ENCODE measurements at regions of chr5 and their contacts with region 1.

Region 1: DNA sequence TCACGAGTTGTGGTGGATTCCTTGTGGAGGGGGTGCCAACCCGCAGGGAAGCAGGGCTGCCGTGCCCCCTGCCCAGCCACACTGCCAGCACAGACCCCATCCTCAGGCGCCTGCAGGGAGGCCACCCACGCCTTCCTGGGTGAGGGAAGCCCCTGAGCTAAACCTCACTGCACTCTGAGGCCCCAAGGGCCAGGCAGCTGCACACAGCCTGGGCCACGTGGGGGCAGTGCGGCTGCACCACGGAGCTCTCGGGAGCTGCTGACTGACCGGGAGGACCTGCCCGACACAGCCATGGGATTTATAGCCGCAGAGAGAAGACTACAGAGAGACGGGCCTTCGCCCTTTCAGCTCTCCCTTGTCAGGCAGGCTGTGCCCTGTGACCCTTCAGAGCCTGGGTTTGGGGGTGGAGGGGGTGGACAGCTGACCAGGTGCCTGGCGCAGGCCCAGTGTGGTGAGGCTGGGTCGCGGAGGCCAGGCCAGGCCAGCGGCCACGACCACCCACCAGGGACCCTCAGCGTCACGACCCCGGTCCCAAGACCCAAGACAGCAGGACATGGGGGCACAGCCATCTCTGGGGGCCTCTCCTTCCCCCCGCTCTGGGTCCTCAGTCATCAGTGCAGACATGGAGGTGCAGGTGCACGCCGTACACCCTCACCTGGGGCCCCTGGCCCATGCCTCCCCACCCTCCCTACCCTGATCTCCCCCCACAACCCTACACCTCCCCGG is 4.3 kb upstream of the AHRR start:
- DNase-seq: peak; percentile 74
- ATAC-seq: peak; percentile 71
- H3K4me3 ChIP-seq: no peak overlapping the region
- H3K27ac ChIP-seq: no peak overlapping the region
- H3K4me1 ChIP-seq: peaks cover 14% of the 10 kb centered on the region
- H3K27me3 ChIP-seq: no peaks in the 10 kb centered on the region
- CTCF ChIP-seq: peak; percentile 89
- POLR2A ChIP-seq: no peak
- RAD21 ChIP-seq: peak; percentile 95

Region 2: DNA sequence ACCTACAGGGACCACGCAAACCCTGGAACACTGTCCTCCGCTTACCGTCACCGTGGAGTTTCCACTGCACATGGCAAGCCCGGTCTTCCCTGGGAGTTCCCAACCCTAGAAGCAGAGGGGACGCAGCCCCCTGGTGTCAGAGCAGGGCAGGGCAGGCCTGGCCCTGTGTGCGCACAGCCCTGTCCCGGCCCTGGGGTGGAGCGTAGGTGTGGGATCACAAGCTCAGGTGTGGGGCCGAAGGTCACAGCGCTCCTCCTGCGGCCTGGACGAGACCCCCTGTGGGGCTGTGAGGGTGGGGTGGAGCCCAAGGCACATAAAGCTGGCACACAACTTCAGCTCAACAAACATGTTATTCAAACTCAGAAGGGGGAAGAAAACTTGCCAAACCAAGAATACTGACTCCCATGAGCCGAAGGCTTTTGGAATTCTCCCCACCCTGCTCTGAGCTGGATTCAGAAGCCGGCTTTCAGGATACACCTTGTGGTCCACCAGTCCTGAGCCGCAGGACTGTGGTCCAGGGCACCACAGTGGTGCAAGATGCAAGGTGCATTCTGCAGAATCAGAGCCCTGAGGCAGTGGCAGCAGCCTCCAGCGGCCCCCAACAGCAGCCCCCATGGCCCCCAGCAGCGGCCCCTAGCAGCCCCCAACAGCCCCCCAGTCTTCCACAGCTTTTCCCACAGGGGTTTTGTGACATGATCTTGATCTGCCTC is 113.9 kb after region 1 on chr5:
- CTCF ChIA-PET with region 1: no interaction called
- POLR2A ChIA-PET with region 1: no interaction called
- dilution Hi-C with region 1: no loop called
- in situ Hi-C with region 1: loop called (anchors 5 kb)
- intact Hi-C with region 1: loop called (anchors 1 kb)
- DNase-seq: peak; percentile 48
- ATAC-seq: peak; percentile 50
- H3K4me3 ChIP-seq: no peak overlapping the region
- H3K27ac ChIP-seq: no peak overlapping the region
- H3K4me1 ChIP-seq: peaks cover 10% of the 10 kb centered on the region
- H3K27me3 ChIP-seq: no peaks in the 10 kb centered on the region
- CTCF ChIP-seq: peak; percentile 61
- POLR2A ChIP-seq: no peak
- RAD21 ChIP-seq: peak; percentile 74

Region 3: DNA sequence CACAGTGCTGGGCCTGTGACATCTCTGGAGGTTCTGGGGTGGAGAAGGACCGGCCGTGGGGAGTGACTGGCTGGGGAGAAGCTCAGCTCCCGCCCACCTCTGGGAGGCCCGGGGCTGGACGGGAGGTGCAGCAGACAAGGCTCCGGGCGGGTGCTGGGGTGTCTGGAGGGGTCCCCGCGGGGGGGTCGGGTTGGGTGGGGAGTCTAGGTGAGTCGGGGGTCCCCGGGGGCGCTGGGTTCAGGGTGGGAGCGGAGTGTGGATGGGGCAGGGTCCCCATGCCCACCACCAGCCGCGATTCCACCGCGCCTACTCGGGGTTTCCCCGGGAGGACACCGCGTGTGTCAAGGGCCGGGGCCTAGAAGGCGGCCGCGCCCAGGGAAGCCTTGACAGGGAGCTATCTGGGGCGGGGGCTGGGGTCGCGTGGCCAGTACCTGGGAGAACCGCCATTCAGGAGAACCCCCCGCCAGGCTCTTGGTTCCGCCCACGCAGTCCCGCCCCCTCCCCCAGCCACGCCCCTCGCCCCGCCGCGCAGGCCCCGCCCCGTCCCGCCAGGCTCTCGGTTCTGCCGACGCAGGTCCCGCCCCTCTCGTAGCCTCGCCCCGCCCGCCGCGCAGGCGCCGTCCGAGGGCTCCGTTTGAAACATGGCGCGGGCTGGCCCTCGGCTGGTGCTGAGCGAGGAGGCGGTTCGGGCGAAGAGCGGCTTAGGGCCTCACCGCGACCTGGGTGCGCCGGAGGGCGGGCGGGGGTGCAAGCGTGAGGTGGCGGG is 294.7 kb after region 1 on chr5 and contains the start of gene CEP72:
- CTCF ChIA-PET with region 1: no interaction called
- POLR2A ChIA-PET with region 1: no interaction called
- dilution Hi-C with region 1: no loop called
- in situ Hi-C with region 1: no loop called
- intact Hi-C with region 1: loop called (anchors 10 kb)
- DNase-seq: peak; percentile 76
- ATAC-seq: peak; percentile 98
- H3K4me3 ChIP-seq: peak within 1 kb of the TSS; percentile 94
- H3K27ac ChIP-seq: peak within 1 kb of the TSS; percentile 55; the same call in 1 of the 2 replicates
- H3K4me1 ChIP-seq: peaks cover 2% of the 10 kb centered on the region; the same call in 1 of the 2 replicates
- H3K27me3 ChIP-seq: peaks cover 4% of the 10 kb centered on the region; the same call in 1 of the 2 replicates
- CTCF ChIP-seq: no peak
- POLR2A ChIP-seq: peak; percentile 36; the same call in 1 of the 2 replicates
- RAD21 ChIP-seq: no peak
- total RNA-seq, gene CEP72: 2.8 and 2.9 TPM in 2 replicates

Region 4: GRCh38 chr5:902129-902916 is 585.1 kb after region 1 on chr5:
- CTCF ChIA-PET with region 1: no interaction called
- POLR2A ChIA-PET with region 1: no interaction called
- dilution Hi-C with region 1: no loop called
- in situ Hi-C with region 1: no loop called
- intact Hi-C with region 1: loop called (anchors 10 kb)
- DNase-seq: no peak
- ATAC-seq: no peak
- H3K4me3 ChIP-seq: no peak overlapping the region
- H3K27ac ChIP-seq: no peak overlapping the region
- H3K4me1 ChIP-seq: no peaks in the 10 kb centered on the region
- H3K27me3 ChIP-seq: no peaks in the 10 kb centered on the region
- CTCF ChIP-seq: no peak
- POLR2A ChIP-seq: no peak
- RAD21 ChIP-seq: no peak

Measured in IMR-90 (cell line).